ENCODE measurements at regions of chr2 and their contacts with region 1.

Region 1: GRCh38 chr2:47767880-47768609 is 14.9 kb upstream of the MSH6 start:
- DNase-seq: no peak
- H3K4me3 ChIP-seq: peak overlapping the region; percentile 40
- H3K27ac ChIP-seq: no peak overlapping the region
- H3K27me3 ChIP-seq: peaks cover 6% of the 10 kb centered on the region
- CTCF ChIP-seq: peak; percentile 98

Region 2: DNA sequence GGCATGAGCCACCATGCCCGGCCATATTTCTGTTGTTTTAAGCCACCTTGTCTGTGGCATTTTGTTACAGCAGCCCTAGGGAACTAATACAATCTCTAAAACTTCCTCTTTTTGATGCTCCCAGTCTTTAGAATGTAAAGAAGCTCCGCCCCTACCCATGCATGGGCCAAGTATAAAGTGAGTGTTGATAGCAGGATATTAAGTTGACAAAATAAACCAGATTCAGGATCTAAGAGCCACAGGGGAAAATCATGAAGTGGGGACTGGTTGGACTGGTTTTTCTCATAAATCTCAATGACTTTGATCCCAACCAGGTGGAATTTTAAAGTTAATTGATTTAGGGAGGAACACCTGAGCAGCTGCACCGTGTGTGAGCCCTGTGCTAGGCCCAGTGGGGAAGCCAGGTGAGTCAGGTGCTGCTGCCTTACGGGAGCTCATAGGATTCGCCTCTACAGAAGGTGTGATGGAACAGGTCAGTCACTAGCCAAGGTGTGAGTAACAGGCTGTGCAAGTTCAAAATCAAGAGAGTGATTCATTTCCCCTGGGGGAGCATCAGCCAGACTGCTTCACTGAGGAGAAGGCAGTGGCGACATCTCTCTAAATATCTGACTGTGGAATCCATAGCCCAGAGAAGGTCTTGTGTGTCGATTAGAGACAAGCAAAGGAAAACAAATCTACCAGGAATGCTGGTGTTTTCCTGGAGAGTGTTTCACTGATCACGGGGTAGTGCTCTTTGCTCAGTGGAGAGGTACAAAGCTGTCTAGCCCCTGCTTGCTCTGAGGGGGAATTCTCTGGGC is 428.1 kb before region 1 on chr2:
- CTCF ChIA-PET with region 1: interaction called, 115 read pairs
- POLR2A ChIA-PET with region 1: interaction called, 3 read pairs
- DNase-seq: no peak
- H3K4me3 ChIP-seq: no peak overlapping the region
- H3K27ac ChIP-seq: no peak overlapping the region
- H3K27me3 ChIP-seq: no peaks in the 10 kb centered on the region
- CTCF ChIP-seq: no peak

Region 3: GRCh38 chr2:47422560-47422959 is 345.5 kb before region 1 on chr2:
- CTCF ChIA-PET with region 1: interaction called, 16 read pairs
- POLR2A ChIA-PET with region 1: no interaction called
- DNase-seq: no peak
- H3K4me3 ChIP-seq: no peak overlapping the region
- H3K27ac ChIP-seq: no peak overlapping the region
- H3K27me3 ChIP-seq: no peaks in the 10 kb centered on the region
- CTCF ChIP-seq: no peak

Region 4: GRCh38 chr2:47747878-47748277 is 20.2 kb before region 1 on chr2:
- CTCF ChIA-PET with region 1: interaction called, 15 read pairs
- POLR2A ChIA-PET with region 1: no interaction called
- DNase-seq: no peak
- H3K4me3 ChIP-seq: no peak overlapping the region
- H3K27ac ChIP-seq: no peak overlapping the region
- H3K27me3 ChIP-seq: peaks cover 3% of the 10 kb centered on the region
- CTCF ChIP-seq: no peak

Region 5: GRCh38 chr2:48016225-48017019 is 248.4 kb after region 1 on chr2:
- CTCF ChIA-PET with region 1: no interaction called
- POLR2A ChIA-PET with region 1: no interaction called
- DNase-seq: no peak
- H3K4me3 ChIP-seq: no peak overlapping the region
- H3K27ac ChIP-seq: no peak overlapping the region
- H3K27me3 ChIP-seq: no peaks in the 10 kb centered on the region
- CTCF ChIP-seq: peak; percentile 31

Region 6: GRCh38 chr2:48279344-48280090 is 511.5 kb after region 1 on chr2:
- CTCF ChIA-PET with region 1: interaction called, 12 read pairs
- POLR2A ChIA-PET with region 1: no interaction called
- DNase-seq: no peak
- H3K4me3 ChIP-seq: no peak overlapping the region
- H3K27ac ChIP-seq: no peak overlapping the region
- H3K27me3 ChIP-seq: no peaks in the 10 kb centered on the region
- CTCF ChIP-seq: no peak

Measured in AG04450 (cell line).